ENCODE measurements at regions of chr5 and their contacts with region 1.

Region 1: DNA sequence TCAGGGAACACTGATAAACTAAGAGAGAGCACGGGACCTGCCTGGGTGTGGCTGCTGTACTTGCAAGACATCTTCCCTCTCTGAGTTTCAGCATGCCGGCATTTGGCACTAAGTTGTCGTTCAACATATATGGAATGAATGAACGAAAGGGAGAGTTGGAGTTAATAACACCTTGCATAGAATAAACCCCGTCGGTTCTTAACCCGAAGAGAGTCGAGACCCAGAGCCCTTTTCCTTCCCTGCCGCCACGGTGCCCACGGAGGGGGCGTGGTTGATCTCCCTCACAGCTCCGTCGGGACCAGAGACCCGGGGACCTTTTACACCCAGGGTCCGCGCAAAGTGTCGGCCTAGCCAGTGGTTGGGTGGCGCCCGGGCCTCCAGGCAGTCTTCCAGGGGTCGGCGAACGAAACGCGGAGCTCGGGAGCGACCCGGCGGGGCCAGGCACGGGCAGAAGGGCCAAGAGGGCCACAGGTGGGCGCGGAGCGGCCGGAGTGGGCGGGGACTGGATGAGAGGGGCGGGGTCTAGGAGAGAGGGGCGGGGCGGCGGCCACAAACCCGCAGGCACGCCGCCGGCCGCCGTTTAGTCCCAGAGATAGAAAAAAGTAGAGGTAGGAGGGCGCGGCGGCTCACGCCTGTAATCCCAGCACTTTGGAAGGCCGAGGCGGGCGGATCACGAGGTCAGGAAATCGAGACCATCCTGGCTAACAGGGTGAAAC is 735 bp upstream of the RPL26L1 start:
- DNase-seq: peak; percentile 35 to 83 (median 56)
- ATAC-seq: peak; percentile 49
- H3K4me3 ChIP-seq: peak overlapping the region; percentile 93
- H3K4me3 Mint-ChIP-seq: peak overlapping the region; percentile 97
- H3K27ac ChIP-seq: peak overlapping the region; percentile 59 to 76
- H3K27ac Mint-ChIP-seq: peak overlapping the region; percentile 96
- H3K4me1 ChIP-seq: peaks cover 21% of the 10 kb centered on the region
- H3K4me1 Mint-ChIP-seq: peaks cover 44% of the 10 kb centered on the region
- H3K27me3 ChIP-seq: no peaks in the 10 kb centered on the region
- H3K27me3 Mint-ChIP-seq: no peaks in the 10 kb centered on the region
- CTCF ChIP-seq: no peak

Region 2: GRCh38 chr5:172283020-172283861 is 675.2 kb before region 1 on chr5 and contains the start of gene UBTD2:
- CTCF ChIA-PET with region 1: interaction called, 3 read pairs
- POLR2A ChIA-PET with region 1: no interaction called
- intact Hi-C with region 1: loop called in 1 of 2 experiments (anchors 10 kb)
- DNase-seq: peak in 13 of 14 experiments; percentile 37 to 86 (median 70)
- ATAC-seq: peak; percentile 69
- H3K4me3 ChIP-seq: peak within 1 kb of the TSS; percentile 81
- H3K4me3 Mint-ChIP-seq: peak within 1 kb of the TSS; percentile 95
- H3K27ac ChIP-seq: no peak within 1 kb of the TSS
- H3K27ac Mint-ChIP-seq: peak within 1 kb of the TSS; percentile 68
- H3K4me1 ChIP-seq: peaks cover 14% of the 10 kb centered on the region
- H3K4me1 Mint-ChIP-seq: peaks cover 33% of the 10 kb centered on the region
- H3K27me3 ChIP-seq: no peaks in the 10 kb centered on the region
- H3K27me3 Mint-ChIP-seq: no peaks in the 10 kb centered on the region
- CTCF ChIP-seq: peak; percentile 68
- total RNA-seq, gene UBTD2: 0.66 to 1.1 TPM

Region 3: DNA sequence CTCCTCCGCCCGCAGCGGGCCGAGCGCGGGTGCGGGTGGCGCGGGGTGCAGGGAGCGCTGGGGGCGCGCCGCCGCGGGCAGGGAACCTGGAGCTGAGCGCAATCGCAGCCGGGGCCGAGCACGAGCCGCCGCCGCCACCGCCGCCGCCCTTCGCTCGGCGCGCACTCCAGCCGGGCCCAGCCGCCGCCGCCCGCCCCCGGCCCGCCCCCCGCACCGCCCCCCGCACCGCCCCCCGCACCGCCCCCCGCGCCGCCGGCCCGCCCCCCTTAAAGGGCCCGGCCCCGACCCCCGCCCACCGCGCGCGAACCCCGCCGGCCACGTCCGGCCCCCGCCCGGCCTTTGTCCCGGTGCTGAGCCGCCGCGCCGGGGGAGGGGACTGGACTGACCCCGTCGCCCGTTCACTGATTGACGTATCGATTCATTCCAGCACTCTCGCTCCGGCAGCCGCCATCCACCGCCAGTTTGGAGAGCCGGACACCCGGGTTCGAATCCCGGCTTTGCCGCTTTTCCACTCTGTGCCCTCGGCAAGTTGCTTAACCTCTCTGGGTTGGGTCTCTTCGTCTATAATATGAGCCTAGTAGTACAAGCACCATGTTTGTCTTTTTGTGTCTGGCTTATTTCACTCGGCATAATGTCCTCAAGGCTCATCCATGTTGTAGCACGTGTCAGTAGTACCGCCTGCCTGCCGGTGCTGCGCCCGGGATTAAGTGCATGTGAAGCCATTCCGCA is 504.0 kb before region 1 on chr5 and contains the start of gene SH3PXD2B:
- CTCF ChIA-PET with region 1: no interaction called
- POLR2A ChIA-PET with region 1: no interaction called
- intact Hi-C with region 1: loop called in 1 of 2 experiments (anchors 10 kb)
- DNase-seq: peak in 12 of 14 experiments; percentile 7 to 70 (median 29)
- ATAC-seq: peak; percentile 70
- H3K4me3 ChIP-seq: peak within 1 kb of the TSS; percentile 38
- H3K4me3 Mint-ChIP-seq: peak within 1 kb of the TSS; percentile 83
- H3K27ac ChIP-seq: no peak within 1 kb of the TSS
- H3K27ac Mint-ChIP-seq: no peak within 1 kb of the TSS
- H3K4me1 ChIP-seq: peaks cover 20% of the 10 kb centered on the region
- H3K4me1 Mint-ChIP-seq: peaks cover 14% of the 10 kb centered on the region
- H3K27me3 ChIP-seq: peaks cover 11 to 12% of the 10 kb centered on the region in 2 experiments
- H3K27me3 Mint-ChIP-seq: peaks cover 24% of the 10 kb centered on the region
- CTCF ChIP-seq: no peak
- total RNA-seq, gene SH3PXD2B: 0.60 to 0.95 TPM

Region 4: GRCh38 chr5:173144200-173145176 is 186.0 kb after region 1 on chr5 and contains the start of gene BNIP1:
- CTCF ChIA-PET with region 1: interaction called, 5 read pairs
- POLR2A ChIA-PET with region 1: interaction called, 8 read pairs
- intact Hi-C with region 1: loop called in 1 of 2 experiments (anchors 2 kb)
- DNase-seq: peak; percentile 90 to 99 (median 97)
- ATAC-seq: peak; percentile 93
- H3K4me3 ChIP-seq: peak within 1 kb of the TSS; percentile 90
- H3K4me3 Mint-ChIP-seq: peak within 1 kb of the TSS; percentile 98
- H3K27ac ChIP-seq: peak within 1 kb of the TSS; percentile 97 to 99
- H3K27ac Mint-ChIP-seq: peak within 1 kb of the TSS; percentile 100
- H3K4me1 ChIP-seq: peaks cover 8% of the 10 kb centered on the region
- H3K4me1 Mint-ChIP-seq: peaks cover 13% of the 10 kb centered on the region
- H3K27me3 ChIP-seq: no peaks in the 10 kb centered on the region
- H3K27me3 Mint-ChIP-seq: no peaks in the 10 kb centered on the region
- CTCF ChIP-seq: peak; percentile 90
- total RNA-seq, gene BNIP1: 22.5 to 24.4 TPM

Measured in CD4-positive, alpha-beta T cell (primary cell).